AG04450 (cell line): ENCODE measurements at regions of chr3 and their contacts with region 1.

Region 1: DNA sequence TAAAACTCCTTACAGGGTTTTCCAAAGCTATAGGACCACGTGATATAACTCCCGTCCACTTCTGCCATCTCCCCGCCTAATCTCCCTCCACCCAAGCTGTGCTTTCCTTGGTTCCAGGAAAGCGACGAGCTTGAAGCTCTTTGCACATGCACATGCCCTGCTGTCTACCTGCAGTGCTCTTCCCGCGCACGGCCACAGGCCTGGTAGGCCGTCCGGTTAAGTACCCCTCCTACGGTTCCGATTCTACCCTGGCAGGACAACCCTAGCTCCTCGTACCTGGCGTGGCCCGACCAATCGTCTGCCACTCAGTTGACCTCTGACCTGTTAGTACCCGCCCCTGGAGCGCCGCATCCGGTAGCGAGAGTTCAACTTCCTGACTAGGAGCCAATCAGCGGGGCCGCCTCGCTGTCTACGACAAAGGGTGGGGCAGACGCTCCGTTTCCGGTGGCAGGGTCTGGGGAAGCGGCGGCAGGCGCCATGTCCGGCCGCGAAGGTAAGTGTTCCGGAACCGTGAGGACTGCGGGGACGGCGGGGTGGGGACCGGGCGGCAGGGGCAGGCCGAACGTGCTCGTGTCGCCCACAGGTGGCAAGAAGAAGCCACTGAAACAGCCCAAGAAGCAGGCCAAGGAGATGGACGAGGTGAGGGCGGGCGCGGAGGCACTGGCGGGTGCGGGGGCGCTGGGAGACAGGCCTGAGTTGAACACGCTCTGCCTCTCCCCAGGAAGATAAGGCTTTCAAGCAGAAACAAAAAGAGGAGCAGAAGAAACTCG is at the starts of genes CCDC51 and TMA7:
- DNase-seq: peak; percentile 77
- H3K4me3 ChIP-seq: peak within 1 kb of the TSS; percentile 91
- H3K27ac ChIP-seq: peak within 1 kb of the TSS; percentile 65
- H3K27me3 ChIP-seq: no peaks in the 10 kb centered on the region
- CTCF ChIP-seq: no peak
- polyA plus RNA-seq, gene CCDC51: 9.5 and 11.1 TPM in 2 replicates
- polyA plus RNA-seq, gene TMA7: 207 and 316 TPM in 2 replicates

Region 2: GRCh38 chr3:48188266-48189201 is 251.5 kb before region 1 on chr3 and contains the start of gene CDC25A:
- CTCF ChIA-PET with region 1: interaction called, 169 read pairs
- POLR2A ChIA-PET with region 1: no interaction called
- DNase-seq: peak; percentile 97
- H3K4me3 ChIP-seq: peak within 1 kb of the TSS; percentile 85
- H3K27ac ChIP-seq: peak within 1 kb of the TSS; percentile 21
- H3K27me3 ChIP-seq: no peaks in the 10 kb centered on the region
- CTCF ChIP-seq: no peak
- polyA plus RNA-seq, gene CDC25A: 1.6 and 2.1 TPM in 2 replicates

Region 3: DNA sequence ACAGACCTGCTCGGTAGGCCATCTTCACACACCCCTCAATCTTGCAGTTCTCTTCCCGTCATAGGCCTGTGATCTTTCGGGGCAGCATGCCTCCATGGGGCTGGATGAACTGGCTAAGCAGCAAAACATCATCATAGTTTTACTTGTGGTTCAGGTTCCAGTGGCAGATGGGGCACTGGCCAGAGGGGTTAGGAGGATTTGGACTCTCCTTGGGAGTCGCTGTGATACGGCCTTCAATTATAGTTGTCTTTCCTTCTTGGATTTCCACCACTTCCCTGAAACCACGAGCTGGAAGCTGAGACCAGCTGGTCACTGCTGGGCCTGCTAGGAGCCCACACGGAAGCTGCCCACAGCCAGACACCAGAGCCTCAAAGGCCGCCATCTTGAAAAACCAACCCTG is 183.4 kb before region 1 on chr3:
- CTCF ChIA-PET with region 1: interaction called, 23 read pairs
- POLR2A ChIA-PET with region 1: no interaction called
- DNase-seq: no peak
- H3K4me3 ChIP-seq: no peak overlapping the region
- H3K27ac ChIP-seq: no peak overlapping the region
- H3K27me3 ChIP-seq: no peaks in the 10 kb centered on the region
- CTCF ChIP-seq: no peak

Region 4: DNA sequence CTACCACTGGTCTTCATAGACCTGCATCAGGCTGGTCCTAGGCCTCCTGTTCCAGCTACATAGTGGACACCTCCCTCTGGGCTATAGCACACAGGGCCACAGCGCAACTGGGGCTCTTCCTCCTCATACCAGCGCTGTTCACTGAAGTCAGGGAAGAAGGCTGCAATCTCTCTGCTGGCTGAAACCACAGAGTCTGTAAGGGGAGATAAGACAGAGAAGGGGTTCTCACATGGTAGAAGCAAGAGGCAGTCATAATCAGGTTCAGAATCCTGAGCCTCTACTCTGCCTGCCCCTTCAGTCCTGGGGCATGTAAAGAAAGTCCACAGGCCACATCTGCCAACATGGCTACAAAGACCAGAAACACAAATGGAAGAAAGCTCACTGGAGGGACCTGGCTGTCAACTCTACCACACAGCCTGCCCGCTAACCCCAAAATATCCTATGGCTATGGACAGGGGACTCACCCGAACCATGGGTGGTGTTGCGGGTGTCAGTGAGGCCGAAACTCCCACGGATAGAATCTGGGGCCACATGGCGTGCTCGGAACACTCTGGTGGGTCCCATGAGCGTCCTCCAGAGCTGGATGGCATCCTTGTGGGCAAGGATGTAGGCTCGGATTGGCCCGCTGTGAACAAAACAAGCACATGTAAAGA is 145.3 kb before region 1 on chr3:
- CTCF ChIA-PET with region 1: interaction called, 26 read pairs
- POLR2A ChIA-PET with region 1: no interaction called
- DNase-seq: no peak
- H3K4me3 ChIP-seq: no peak overlapping the region
- H3K27ac ChIP-seq: no peak overlapping the region
- H3K27me3 ChIP-seq: no peaks in the 10 kb centered on the region
- CTCF ChIP-seq: no peak

Region 5: DNA sequence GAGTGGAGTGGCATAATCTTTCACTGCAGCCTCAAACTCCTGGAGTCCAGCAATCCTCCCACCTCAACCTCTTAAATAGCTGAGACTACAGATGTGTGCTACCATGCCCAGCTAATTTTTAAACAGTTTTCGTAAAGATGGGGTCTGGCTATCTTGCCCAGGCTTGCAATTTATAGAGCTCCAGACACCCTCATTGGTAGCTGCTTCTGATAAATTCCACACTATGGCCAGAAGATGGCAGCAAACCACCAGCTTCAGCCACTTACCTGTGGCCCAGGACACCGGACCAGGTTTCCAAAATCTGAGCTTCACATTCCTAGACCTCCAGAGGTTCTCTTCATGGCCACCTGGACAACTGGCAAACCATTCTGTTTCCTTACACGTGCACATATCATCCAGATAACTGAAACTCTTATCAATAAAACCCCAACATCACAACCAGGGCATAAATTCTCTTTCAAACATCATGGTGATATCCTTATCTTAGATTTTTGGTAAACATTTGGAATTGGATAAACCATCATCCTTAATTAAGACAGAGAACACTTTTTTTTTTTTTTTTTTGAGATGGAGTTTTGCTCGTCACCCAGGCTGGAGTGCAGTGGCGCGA is 39.1 kb before region 1 on chr3:
- CTCF ChIA-PET with region 1: interaction called, 402 read pairs
- POLR2A ChIA-PET with region 1: interaction called, 13 read pairs
- DNase-seq: no peak
- H3K4me3 ChIP-seq: no peak overlapping the region
- H3K27ac ChIP-seq: no peak overlapping the region
- H3K27me3 ChIP-seq: no peaks in the 10 kb centered on the region
- CTCF ChIP-seq: peak; percentile 75

Region 6: DNA sequence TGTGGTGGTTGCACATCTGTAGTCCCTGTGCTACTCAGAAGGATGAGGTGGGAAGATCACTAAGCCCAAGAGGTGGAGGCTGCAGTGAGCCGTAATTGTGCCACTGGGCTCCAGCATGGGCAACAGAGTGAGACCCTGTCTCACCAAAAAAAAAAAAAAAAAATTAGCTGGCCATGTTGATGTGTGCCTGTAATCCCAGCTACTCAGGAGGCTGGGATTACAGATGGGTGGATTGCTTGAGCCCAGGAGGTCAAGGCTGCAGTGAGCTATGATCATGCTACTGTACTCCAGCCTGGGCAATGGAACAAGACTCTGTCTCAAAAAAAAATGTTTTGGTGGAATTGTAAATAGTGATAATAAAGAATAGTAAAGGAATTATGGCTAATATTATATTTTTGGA is 16.5 kb after region 1 on chr3:
- CTCF ChIA-PET with region 1: interaction called, 23 read pairs
- POLR2A ChIA-PET with region 1: interaction called, 8 read pairs
- DNase-seq: no peak
- H3K4me3 ChIP-seq: no peak overlapping the region
- H3K27ac ChIP-seq: no peak overlapping the region
- H3K27me3 ChIP-seq: no peaks in the 10 kb centered on the region
- CTCF ChIP-seq: no peak

Region 7: GRCh38 chr3:48572517-48572916 is 132.5 kb after region 1 on chr3:
- CTCF ChIA-PET with region 1: no interaction called
- POLR2A ChIA-PET with region 1: no interaction called
- DNase-seq: no peak
- H3K4me3 ChIP-seq: no peak overlapping the region
- H3K27ac ChIP-seq: no peak overlapping the region
- H3K27me3 ChIP-seq: no peaks in the 10 kb centered on the region
- CTCF ChIP-seq: no peak

Region 8: DNA sequence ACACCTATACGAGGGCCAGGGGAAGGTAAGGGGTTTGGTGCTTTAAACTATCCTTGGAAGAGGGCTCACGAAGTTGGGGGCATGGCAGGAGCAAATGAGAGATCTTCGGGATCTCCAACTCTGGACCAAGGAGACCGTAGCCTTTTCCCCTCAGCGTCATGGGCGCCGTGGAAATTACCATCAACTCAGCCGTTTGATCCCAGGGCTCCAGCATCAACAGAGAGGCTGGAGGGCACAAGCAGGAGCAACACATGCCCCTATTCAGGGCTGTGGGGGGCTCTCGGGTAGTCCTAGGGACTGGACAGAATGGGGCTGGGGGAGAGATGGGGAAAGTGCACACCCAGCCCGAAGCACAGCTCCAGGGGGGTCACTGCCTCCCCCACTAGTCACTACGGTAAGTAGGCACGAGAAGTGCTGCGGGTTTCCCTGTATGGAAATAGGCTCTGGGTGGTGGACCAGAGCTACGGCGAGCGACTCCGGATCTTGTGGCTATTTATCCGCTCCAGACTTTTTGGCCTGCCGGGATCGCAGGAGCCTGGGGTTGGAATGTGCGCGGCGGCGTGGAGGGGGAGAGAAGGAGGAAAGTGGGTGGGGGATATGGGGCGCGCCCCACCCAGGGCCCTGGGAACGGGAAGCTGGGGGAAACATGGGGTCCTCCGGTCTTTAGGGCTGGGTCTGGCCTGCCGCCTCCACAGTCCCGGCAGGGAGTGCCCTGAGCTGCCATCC is 693.4 kb after region 1 on chr3:
- CTCF ChIA-PET with region 1: no interaction called
- POLR2A ChIA-PET with region 1: no interaction called
- DNase-seq: peak; percentile 69
- H3K4me3 ChIP-seq: peak overlapping the region; percentile 89
- H3K27ac ChIP-seq: peak overlapping the region; percentile 49
- H3K27me3 ChIP-seq: no peaks in the 10 kb centered on the region
- CTCF ChIP-seq: no peak

Region 9: GRCh38 chr3:49346797-49347251 is 906.8 kb after region 1 on chr3:
- CTCF ChIA-PET with region 1: no interaction called
- POLR2A ChIA-PET with region 1: no interaction called
- DNase-seq: no peak
- H3K4me3 ChIP-seq: no peak overlapping the region
- H3K27ac ChIP-seq: no peak overlapping the region
- H3K27me3 ChIP-seq: no peaks in the 10 kb centered on the region
- CTCF ChIP-seq: no peak